ENCODE measurements at regions of chr19 and their contacts with region 1.

Region 1: DNA sequence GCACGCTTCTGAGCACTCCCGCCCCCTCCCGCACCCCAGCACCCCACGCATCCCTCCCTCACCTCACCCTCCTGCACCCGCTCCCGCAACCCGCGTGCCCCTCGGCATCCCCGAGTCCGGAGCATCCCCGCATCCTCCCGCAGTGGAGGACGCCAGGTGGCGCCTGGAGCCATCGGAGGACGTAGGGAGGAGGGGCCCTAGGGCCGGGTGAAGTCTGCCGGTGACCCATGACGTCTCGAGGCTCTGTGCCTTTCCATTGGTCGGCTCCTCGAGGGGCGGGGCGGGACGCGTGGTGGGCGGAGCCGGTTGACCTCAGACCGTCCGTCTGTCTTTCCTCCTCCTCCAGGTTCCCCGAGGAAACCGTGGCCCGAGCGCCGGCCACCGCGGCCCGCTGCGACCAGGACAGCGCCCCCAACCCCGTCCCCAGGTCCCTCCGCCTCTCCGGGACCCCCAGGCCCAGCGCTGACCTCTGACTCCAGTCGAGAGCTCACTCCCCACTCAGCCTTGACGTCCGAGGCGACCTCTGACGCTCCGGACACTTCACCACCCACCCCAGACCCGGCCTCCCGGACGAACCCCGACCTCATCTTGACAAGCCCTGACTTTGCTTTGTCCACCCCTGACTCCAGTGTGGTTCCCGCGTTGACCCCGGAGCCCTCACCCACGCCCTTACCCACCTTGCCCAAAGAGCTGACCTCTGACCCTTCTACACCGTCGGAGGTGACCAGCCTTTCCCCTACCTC is 19.9 kb downstream of the SBK2 start:
- DNase-seq: peak; percentile 91 to 95
- ATAC-seq: peak; percentile 100
- H3K4me3 ChIP-seq: peak overlapping the region; percentile 16
- H3K4me3 Mint-ChIP-seq: peak overlapping the region; percentile 51
- H3K27ac ChIP-seq: peak overlapping the region; percentile 73
- H3K27ac Mint-ChIP-seq: peak overlapping the region in 1 of 2 donors; percentile 89
- H3K4me1 ChIP-seq: peaks cover 10% of the 10 kb centered on the region
- H3K4me1 Mint-ChIP-seq: peaks cover 0 to 8% of the 10 kb centered on the region in 2 donors
- H3K27me3 ChIP-seq: no peaks in the 10 kb centered on the region
- H3K27me3 Mint-ChIP-seq: no peaks in the 10 kb centered on the region
- CTCF ChIP-seq: peak; percentile 74

Region 2: DNA sequence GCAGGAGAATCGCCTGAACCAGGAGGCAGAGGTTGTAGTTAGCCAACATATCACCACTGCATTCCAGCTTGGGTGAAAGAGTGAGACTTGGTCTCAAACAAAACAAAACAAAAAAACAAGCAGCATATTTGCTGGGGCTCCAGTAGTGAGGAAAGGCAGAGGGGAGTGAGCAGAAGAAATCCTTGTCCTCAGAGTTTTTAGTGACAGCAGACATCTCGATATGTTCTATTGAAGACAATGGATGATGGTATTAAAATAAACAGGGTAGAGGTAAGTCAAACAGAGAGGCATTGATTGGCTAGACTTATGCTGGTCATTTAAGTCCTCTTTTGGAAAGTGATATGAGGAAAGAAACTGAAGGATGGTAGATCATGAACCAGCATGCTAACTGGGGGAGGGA is 588.8 kb before region 1 on chr19:
- intact Hi-C with region 1: no loop called
- DNase-seq: no peak
- ATAC-seq: no peak
- H3K4me3 ChIP-seq: no peak overlapping the region
- H3K4me3 Mint-ChIP-seq: no peak overlapping the region
- H3K27ac ChIP-seq: no peak overlapping the region
- H3K27ac Mint-ChIP-seq: no peak overlapping the region
- H3K4me1 ChIP-seq: no peaks in the 10 kb centered on the region
- H3K4me1 Mint-ChIP-seq: peaks cover 0 to 9% of the 10 kb centered on the region in 2 donors
- H3K27me3 ChIP-seq: no peaks in the 10 kb centered on the region
- H3K27me3 Mint-ChIP-seq: no peaks in the 10 kb centered on the region
- CTCF ChIP-seq: no peak

Region 3: GRCh38 chr19:55605207-55605636 is 88.2 kb after region 1 on chr19:
- intact Hi-C with region 1: loop called (anchors 1 kb)
- DNase-seq: peak; percentile 93 to 99
- ATAC-seq: peak; percentile 77 to 88 (median 81)
- H3K4me3 ChIP-seq: peak overlapping the region; percentile 52
- H3K4me3 Mint-ChIP-seq: peak overlapping the region; percentile 88
- H3K27ac ChIP-seq: peak overlapping the region; percentile 71
- H3K27ac Mint-ChIP-seq: peak overlapping the region; percentile 93 to 95
- H3K4me1 ChIP-seq: peaks cover 36% of the 10 kb centered on the region
- H3K4me1 Mint-ChIP-seq: peaks cover 56 to 70% of the 10 kb centered on the region in 2 donors
- H3K27me3 ChIP-seq: no peaks in the 10 kb centered on the region
- H3K27me3 Mint-ChIP-seq: no peaks in the 10 kb centered on the region
- CTCF ChIP-seq: no peak

Region 4: GRCh38 chr19:55632463-55632834 is 115.4 kb after region 1 on chr19:
- intact Hi-C with region 1: loop called (anchors 1 kb)
- DNase-seq: peak; percentile 74 to 97
- ATAC-seq: peak; percentile 62 to 83 (median 63)
- H3K4me3 ChIP-seq: no peak overlapping the region
- H3K4me3 Mint-ChIP-seq: peak overlapping the region; percentile 11
- H3K27ac ChIP-seq: no peak overlapping the region
- H3K27ac Mint-ChIP-seq: peak overlapping the region; percentile 15 to 77
- H3K4me1 ChIP-seq: peaks cover 39% of the 10 kb centered on the region
- H3K4me1 Mint-ChIP-seq: peaks cover 34 to 40% of the 10 kb centered on the region in 2 donors
- H3K27me3 ChIP-seq: no peaks in the 10 kb centered on the region
- H3K27me3 Mint-ChIP-seq: no peaks in the 10 kb centered on the region
- CTCF ChIP-seq: peak; percentile 75